Sigmoid colon (tissue), 7 donors: ENCODE measurements at regions of chr16 and their contacts with region 1.

Region 1: GRCh38 chr16:23149349-23149996 is at the start of gene USP31:
- DNase-seq: peak; percentile 97
- H3K4me3 ChIP-seq: peak within 1 kb of the TSS; percentile 53 to 82 (median 81)
- H3K27ac ChIP-seq: peak within 1 kb of the TSS; percentile 86 to 93 (median 90)
- H3K4me1 ChIP-seq: peaks cover 0 to 46% (median 34%) of the 10 kb centered on the region in 4 donors
- H3K27me3 ChIP-seq: no peaks in the 10 kb centered on the region
- CTCF ChIP-seq: no peak
- EP300 ChIP-seq: no peak
- POLR2A ChIP-seq: no peak
- total RNA-seq, gene USP31: 12.7 to 21.0 (median 16.7) TPM

Region 2: GRCh38 chr16:22977294-22977697 is 172.2 kb before region 1 on chr16:
- intact Hi-C with region 1: no loop called
- DNase-seq: no peak
- H3K4me3 ChIP-seq: no peak overlapping the region
- H3K27ac ChIP-seq: no peak overlapping the region
- H3K4me1 ChIP-seq: no peaks in the 10 kb centered on the region
- H3K27me3 ChIP-seq: no peaks in the 10 kb centered on the region
- CTCF ChIP-seq: no peak
- EP300 ChIP-seq: no peak
- POLR2A ChIP-seq: no peak

Region 3: DNA sequence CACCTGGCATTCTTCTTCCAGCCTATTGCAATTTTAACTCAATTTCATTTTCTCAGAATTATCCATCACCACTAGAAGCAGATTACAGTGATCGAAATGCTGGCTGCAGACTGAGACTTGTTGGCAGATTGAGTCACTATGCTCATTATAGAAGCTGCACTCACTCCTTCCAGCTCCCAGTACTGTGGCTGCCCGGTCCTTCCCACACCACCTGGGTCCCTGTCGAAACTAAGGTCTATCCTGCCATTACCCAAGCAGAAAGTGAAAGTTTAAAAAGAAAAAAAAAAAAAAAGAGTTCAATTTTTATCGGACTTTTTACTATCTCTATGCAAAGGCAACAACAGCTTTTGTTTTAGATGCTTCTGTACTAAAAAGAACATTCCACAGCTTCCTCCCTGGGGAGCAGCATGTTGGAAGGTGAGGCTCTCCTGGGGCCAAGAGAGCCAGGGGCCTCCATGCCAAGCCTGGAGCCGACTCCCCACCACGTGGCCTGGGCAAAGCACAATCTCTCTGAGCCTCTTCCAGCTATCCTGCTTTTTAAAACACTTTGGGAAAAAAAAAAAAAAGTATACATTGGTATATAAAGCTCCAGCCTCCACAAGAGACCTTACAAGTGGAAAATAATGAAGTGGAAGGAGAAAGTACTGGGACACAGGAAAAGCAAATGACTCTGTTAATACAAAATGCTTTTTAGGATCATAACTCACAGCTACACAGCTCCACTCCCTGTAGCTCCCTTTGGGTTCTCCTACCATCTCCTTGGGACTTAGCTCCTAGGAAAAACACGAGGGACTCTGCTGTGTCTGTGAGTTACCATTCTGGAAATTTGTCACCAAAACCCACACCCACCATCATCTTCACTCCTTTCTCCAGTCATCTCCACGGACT is 78.0 kb before region 1 on chr16:
- intact Hi-C with region 1: loop called (anchors 2 kb)
- DNase-seq: no peak
- H3K4me3 ChIP-seq: peak overlapping the region in 1 of 4 donors; percentile 6
- H3K27ac ChIP-seq: peak overlapping the region; percentile 50 to 83 (median 76)
- H3K4me1 ChIP-seq: peaks cover 0 to 30% (median 25%) of the 10 kb centered on the region in 4 donors
- H3K27me3 ChIP-seq: no peaks in the 10 kb centered on the region
- CTCF ChIP-seq: no peak
- EP300 ChIP-seq: no peak
- POLR2A ChIP-seq: no peak

Region 4: DNA sequence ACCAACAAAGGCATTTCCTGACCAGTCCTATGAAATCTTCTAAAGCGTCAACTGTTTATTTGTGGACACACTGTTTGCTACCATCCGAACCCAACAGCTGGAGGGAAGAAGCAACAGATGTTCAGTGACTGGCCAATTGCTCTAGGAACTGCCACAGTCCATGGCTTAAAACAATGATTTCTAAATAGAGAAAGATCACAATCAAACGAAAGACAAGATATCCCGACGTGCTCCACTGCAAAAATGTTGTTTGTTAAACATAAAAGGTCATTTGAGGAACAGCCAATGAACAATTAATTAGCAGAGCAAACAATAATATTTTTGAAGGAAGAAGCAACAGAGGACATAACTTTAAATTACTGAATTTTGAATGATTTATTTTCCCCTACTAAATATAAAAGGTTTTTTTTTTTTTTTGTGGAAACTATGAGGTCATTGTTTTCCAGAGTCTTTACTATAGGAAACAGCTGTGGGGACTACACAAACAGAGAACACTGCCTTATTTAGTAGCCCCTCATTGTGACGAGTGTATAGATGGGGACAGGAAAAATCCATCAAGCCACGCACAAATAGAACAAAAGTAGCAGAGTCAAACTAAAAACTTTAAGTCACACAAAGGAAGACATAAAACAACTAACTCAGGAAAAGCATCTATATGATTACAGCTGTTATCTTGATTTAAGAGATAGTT is 17.4 kb before region 1 on chr16:
- intact Hi-C with region 1: loop called (anchors 2 kb)
- DNase-seq: no peak
- H3K4me3 ChIP-seq: peak overlapping the region in 3 of 4 donors; percentile 29 to 36 (median 30)
- H3K27ac ChIP-seq: peak overlapping the region; percentile 81 to 89 (median 84)
- H3K4me1 ChIP-seq: peaks cover 0 to 56% (median 40%) of the 10 kb centered on the region in 4 donors
- H3K27me3 ChIP-seq: no peaks in the 10 kb centered on the region
- CTCF ChIP-seq: no peak
- EP300 ChIP-seq: no peak
- POLR2A ChIP-seq: no peak

Region 5: GRCh38 chr16:23182460-23183309 is 33.2 kb after region 1 on chr16 and contains the start of gene SCNN1G:
- intact Hi-C with region 1: no loop called
- DNase-seq: peak; percentile 80
- H3K4me3 ChIP-seq: peak within 1 kb of the TSS; percentile 22 to 57 (median 47)
- H3K27ac ChIP-seq: peak within 1 kb of the TSS in 1 of 4 donors; percentile 20
- H3K4me1 ChIP-seq: peaks cover 0 to 15% (median 14%) of the 10 kb centered on the region in 4 donors
- H3K27me3 ChIP-seq: peaks cover 16 to 46% (median 19%) of the 10 kb centered on the region in 3 donors
- CTCF ChIP-seq: peak; percentile 74 to 98 (median 90)
- EP300 ChIP-seq: no peak
- POLR2A ChIP-seq: no peak
- total RNA-seq, gene SCNN1G: under 0.01 to 0.16 TPM in 2 of 4 donors, not detected in the others